T-cell (primary cell): ENCODE measurements at regions of chr10 and their contacts with region 1.

Region 1: GRCh38 chr10:12264204-12264940 is 68.4 kb downstream of the CDC123 start:
- DNase-seq: peak; percentile 30 to 79 (median 59)
- ATAC-seq: peak; percentile 82 to 87 (median 86)
- H3K4me3 ChIP-seq: peak overlapping the region; percentile 26 to 77
- H3K4me3 Mint-ChIP-seq: peak overlapping the region; percentile 52 to 78 (median 64)
- H3K27ac ChIP-seq: no peak overlapping the region
- H3K27ac Mint-ChIP-seq: peak overlapping the region in 1 of 2 donors; percentile 25
- H3K4me1 ChIP-seq: peaks cover 2 to 17% of the 10 kb centered on the region in 2 experiments
- H3K4me1 Mint-ChIP-seq: peaks cover 5 to 30% (median 18%) of the 10 kb centered on the region in 3 donors
- H3K27me3 ChIP-seq: no peaks in the 10 kb centered on the region
- H3K27me3 Mint-ChIP-seq: no peaks in the 10 kb centered on the region

Region 2: GRCh38 chr10:12605580-12606405 is 341.4 kb after region 1 on chr10:
- CTCF ChIA-PET with region 1: interaction called in 1 of 2 experiments, 11 read pairs
- POLR2A ChIA-PET with region 1: no interaction called
- DNase-seq: peak; percentile 34 to 76 (median 54)
- ATAC-seq: peak; percentile 84 to 88 (median 87)
- H3K4me3 ChIP-seq: peak overlapping the region; percentile 52 to 55
- H3K4me3 Mint-ChIP-seq: peak overlapping the region; percentile 83 to 86 (median 85)
- H3K27ac ChIP-seq: peak overlapping the region; percentile 85
- H3K27ac Mint-ChIP-seq: peak overlapping the region; percentile 96 to 99
- H3K4me1 ChIP-seq: peaks cover 8 to 22% of the 10 kb centered on the region in 2 experiments
- H3K4me1 Mint-ChIP-seq: peaks cover 22 to 37% (median 24%) of the 10 kb centered on the region in 3 donors
- H3K27me3 ChIP-seq: no peaks in the 10 kb centered on the region
- H3K27me3 Mint-ChIP-seq: no peaks in the 10 kb centered on the region